MCF 10A (cell line): ENCODE measurements at regions of chr5 and their contacts with region 1.

Region 1: DNA sequence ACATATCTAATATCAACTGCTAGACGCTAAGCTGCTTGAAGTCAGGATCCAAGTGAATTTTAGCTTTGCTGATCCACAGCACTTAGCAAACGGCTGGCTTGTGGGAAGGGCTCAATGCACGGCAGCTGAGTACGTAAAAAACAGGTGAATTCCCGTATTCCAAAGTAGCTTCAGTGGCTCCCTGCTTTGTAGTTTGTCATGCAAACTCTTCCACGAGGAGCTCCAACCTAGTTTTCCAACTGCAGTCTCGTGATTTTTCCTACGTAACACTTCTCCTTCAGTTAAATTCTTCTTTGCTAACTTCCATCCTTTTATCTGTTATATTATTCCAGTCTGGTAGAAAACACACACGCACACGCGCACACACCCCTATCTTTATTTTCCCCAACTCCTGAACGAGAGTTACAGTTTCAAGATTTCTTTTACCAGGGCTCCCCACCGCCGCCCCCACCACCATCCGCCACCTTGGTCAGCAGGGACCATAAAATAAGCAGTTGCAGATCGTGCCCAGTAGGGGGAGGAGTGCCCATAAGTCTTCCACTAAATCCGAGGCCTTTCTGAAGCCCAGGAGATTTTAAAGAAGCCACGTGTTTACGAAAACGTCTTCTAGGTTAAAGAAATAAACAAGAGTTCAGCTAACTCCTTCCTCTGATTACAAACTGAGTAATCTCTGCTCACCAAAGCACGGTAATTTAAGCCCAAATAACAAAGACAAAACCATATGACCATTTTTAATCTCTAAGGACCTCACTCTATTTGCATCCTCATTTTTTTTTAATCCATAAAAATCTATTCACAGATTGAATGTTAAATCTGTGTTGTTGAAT is 34.8 kb upstream of the TRIO start:
- DNase-seq: peak; percentile 80
- H3K4me3 Mint-ChIP-seq: no peak overlapping the region
- H3K27ac Mint-ChIP-seq: no peak overlapping the region
- H3K4me1 Mint-ChIP-seq: peaks cover 19% of the 10 kb centered on the region
- H3K27me3 Mint-ChIP-seq: no peaks in the 10 kb centered on the region
- CTCF ChIP-seq: peak; percentile 26

Region 2: GRCh38 chr5:13921578-13921977 is 186.8 kb before region 1 on chr5:
- CTCF ChIA-PET with region 1: no interaction called
- POLR2A ChIA-PET with region 1: no interaction called
- intact Hi-C with region 1: no loop called
- DNase-seq: no peak
- H3K4me3 Mint-ChIP-seq: no peak overlapping the region
- H3K27ac Mint-ChIP-seq: no peak overlapping the region
- H3K4me1 Mint-ChIP-seq: peaks cover 7% of the 10 kb centered on the region
- H3K27me3 Mint-ChIP-seq: no peaks in the 10 kb centered on the region
- CTCF ChIP-seq: no peak

Region 3: DNA sequence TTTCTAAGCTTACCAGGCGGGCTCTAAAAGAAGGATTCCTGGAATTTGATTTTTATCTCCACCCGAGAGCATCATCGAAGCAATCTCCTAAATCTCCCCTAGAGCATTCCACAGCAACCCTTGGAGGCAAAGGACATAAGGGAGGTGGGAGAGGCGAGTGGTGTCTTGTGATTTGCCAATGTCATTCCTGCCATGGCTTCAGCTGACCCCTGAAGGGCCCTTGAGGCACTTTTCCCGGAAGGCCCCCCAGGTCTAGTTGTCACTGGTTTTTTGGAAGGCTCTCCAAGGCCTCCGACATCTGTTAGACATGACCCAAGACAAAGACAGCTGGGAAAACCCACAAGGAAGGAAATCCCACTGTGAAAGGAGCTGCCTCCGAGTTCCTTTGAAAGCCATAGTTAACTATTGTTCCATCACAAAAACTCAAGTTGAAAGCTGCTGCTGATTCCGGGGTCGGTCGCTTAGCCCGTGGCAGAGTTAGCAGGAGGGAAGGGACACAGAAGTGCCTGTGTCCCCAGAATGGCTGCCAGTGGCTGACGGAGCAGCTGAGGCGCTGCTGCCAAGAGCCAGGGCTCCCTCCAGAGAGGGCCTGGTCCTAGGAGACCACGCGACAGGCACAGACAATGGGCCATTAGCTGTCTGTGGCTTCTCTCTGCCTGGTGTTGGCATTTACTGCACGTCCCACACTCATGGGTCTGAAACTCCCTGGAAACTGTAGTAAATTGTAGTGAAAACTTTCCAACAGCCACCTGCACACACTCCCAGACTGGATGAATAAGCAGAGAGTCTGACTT is 10.3 kb after region 1 on chr5:
- CTCF ChIA-PET with region 1: interaction called, 12 read pairs
- POLR2A ChIA-PET with region 1: interaction called, 3 read pairs
- intact Hi-C with region 1: no loop called
- DNase-seq: no peak
- H3K4me3 Mint-ChIP-seq: no peak overlapping the region
- H3K27ac Mint-ChIP-seq: no peak overlapping the region
- H3K4me1 Mint-ChIP-seq: no peaks in the 10 kb centered on the region
- H3K27me3 Mint-ChIP-seq: no peaks in the 10 kb centered on the region
- CTCF ChIP-seq: no peak